Heart right ventricle (tissue), 16 donors: ENCODE measurements at regions of chr5 and their contacts with region 1.

Region 1: DNA sequence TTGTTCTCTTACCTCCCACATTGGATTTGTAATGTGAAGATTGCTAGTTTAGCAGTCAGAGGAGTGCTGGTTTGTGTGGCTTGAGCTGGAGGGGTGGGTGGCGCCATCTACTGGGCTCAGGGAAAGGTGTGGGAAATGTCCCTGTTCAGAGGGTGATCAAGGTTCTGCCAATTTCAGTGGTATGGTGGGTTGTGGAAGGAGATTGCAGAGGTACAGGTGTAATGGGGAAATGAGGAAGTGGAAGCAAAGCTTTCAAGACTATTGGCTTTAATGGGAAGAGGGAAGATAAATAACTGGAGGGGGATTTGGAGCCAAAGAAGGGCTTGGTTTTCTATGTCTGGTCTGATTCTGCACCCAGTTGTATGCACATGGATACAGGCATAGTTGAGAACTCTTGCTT is 76.4 kb downstream of the OSMR start:
- DNase-seq: peak; percentile 33 to 41
- ATAC-seq: peak in 7 of 8 donors; percentile 28 to 77 (median 72)
- H3K4me3 ChIP-seq: no peak overlapping the region
- H3K27ac ChIP-seq: no peak overlapping the region
- H3K4me1 ChIP-seq: peaks cover 0 to 23% (median 9%) of the 10 kb centered on the region in 9 donors
- H3K27me3 ChIP-seq: no peaks in the 10 kb centered on the region
- CTCF ChIP-seq: peak; percentile 47 to 82 (median 69)

Region 2: DNA sequence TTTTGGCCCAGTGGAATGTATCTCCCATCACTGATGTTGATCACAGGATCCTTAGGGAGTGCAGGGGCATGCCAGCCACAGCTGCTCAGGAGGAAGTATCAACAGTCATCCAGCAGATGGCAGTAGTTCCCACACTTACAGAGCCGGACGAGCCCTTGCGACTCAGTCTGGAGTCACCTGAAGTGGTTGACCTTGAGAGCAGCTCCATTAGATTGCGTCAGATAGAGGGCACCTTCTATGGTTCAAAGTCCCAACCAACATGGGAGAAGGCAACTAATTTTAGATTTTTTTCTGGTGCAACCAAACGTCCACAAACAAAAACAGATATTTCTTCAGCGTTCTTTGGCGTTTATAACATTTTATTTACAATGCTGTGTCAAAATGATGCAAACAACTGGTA is 539.3 kb before region 1 on chr5:
- intact Hi-C with region 1: loop called in 1 of 10 experiments (anchors 5 kb)
- DNase-seq: peak; percentile 30 to 58
- ATAC-seq: peak; percentile 71 to 92 (median 81)
- H3K4me3 ChIP-seq: no peak overlapping the region
- H3K27ac ChIP-seq: no peak overlapping the region
- H3K4me1 ChIP-seq: peaks cover 0 to 6% (median 0%) of the 10 kb centered on the region in 9 donors
- H3K27me3 ChIP-seq: peaks cover 0 to 28% (median 6%) of the 10 kb centered on the region in 7 donors
- CTCF ChIP-seq: peak; percentile 51 to 85 (median 79)

Region 3: GRCh38 chr5:38433160-38433861 is 488.9 kb before region 1 on chr5:
- intact Hi-C with region 1: loop called in 2 of 10 experiments (anchors 10 kb)
- DNase-seq: peak; percentile 59 to 76
- ATAC-seq: peak; percentile 84 to 91 (median 88)
- H3K4me3 ChIP-seq: no peak overlapping the region
- H3K27ac ChIP-seq: peak overlapping the region in 6 of 10 donors; percentile 14 to 69 (median 36)
- H3K4me1 ChIP-seq: peaks cover 6 to 35% (median 18%) of the 10 kb centered on the region in 9 donors
- H3K27me3 ChIP-seq: peaks cover 0 to 65% (median 0%) of the 10 kb centered on the region in 7 donors
- CTCF ChIP-seq: peak in 1 of 9 donors; percentile 19

Region 4: GRCh38 chr5:38672059-38672788 is 250.0 kb before region 1 on chr5:
- intact Hi-C with region 1: loop called in 1 of 10 experiments (anchors 10 kb)
- DNase-seq: no peak
- ATAC-seq: no peak
- H3K4me3 ChIP-seq: no peak overlapping the region
- H3K27ac ChIP-seq: no peak overlapping the region
- H3K4me1 ChIP-seq: no peaks in the 10 kb centered on the region
- H3K27me3 ChIP-seq: no peaks in the 10 kb centered on the region
- CTCF ChIP-seq: no peak

Region 5: DNA sequence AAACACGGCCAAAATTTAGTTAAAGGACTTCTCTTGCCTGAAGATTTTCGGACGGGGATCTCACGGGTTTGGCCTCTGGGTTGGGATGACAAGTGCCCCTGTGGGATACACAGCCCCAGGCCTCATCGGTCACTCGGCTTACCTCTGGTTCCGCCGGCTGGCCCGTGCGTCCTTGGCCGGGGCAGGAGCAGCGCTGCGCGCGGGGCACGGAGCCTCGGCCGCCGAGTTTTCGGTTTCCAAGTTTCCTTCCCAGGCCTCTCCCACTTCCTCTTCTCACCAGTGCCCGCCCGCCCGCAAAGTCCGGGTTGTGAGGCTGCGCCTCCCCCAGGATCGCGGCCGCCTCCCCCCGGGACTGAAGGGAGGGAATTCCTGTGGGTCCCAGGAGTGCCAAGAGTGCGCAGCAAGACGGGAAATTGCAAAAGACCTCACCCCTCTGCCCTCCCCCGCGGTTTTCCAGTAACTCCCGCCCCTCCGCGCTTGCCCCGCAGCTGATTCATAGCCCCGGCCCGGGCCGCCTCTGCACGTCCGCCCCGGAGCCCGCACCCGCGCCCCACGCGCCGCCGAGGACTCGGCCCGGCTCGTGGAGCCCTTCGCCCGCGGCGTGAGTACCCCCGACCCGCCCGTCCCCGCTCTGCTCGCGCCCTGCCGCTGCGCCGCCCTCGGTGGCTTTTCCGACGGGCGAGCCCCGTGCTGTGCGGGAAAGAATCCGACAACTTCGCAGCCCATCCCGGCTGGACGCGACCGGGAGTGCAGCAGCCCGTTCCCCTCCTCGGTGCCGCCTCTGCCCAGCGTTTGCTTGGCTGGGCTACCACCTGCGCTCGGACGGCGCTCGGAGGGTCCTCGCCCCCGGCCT is 76.4 kb before region 1 on chr5 and contains the start of gene OSMR:
- intact Hi-C with region 1: loop called in 1 of 10 experiments (anchors 5 kb)
- DNase-seq: peak; percentile 91 to 93
- ATAC-seq: peak; percentile 95 to 98 (median 96)
- H3K4me3 ChIP-seq: peak within 1 kb of the TSS; percentile 51 to 87 (median 76)
- H3K27ac ChIP-seq: peak within 1 kb of the TSS; percentile 74 to 98 (median 96)
- H3K4me1 ChIP-seq: peaks cover 0 to 33% (median 16%) of the 10 kb centered on the region in 9 donors
- H3K27me3 ChIP-seq: peaks cover 0 to 51% (median 17%) of the 10 kb centered on the region in 7 donors
- CTCF ChIP-seq: no peak
- total RNA-seq, gene OSMR: 3.9 to 33.4 (median 8.3) TPM